CD4-positive, alpha-beta T cell (primary cell): ENCODE measurements at regions of chr18 and their contacts with region 1.

Region 1: DNA sequence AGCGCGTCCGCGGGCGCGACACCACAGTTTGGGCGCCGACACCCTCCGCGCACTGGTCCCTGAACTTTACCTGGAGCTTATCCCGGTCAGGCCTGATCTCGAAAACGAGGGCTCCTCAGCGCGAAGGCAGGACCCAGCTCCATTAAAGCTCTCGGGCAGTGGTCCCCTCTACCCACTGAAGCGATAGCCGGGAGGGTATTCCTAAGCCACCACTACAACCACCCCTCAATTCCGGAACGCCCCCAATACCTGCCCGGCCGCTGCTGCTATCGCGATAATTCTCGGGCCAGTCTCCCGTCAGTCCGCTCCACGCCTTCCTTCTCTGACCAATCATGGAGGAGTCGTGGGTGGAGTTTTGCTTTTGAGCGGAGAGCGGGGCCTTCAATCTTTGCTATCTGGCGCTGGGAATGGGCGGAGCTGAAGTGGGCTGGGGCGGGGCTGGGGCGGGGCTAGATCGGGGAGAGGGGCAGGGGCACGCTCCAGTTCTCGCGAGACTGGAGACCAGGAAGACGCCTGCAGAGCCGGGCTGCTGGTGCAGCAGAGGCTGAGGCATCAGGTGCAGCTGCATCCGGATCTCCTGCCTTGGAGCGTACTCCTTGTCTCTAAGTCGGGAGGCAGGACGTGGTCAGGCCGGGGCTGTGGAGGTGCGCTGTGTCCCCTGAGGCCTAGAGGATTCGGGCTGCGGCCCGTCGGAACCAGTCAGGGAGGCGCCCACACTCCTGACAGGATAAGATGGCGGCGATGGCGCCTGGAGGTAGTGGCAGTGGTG is at the starts of genes PIGN and RELCH:
- DNase-seq: peak; percentile 87 to 99 (median 91)
- ATAC-seq: peak; percentile 89
- H3K4me3 ChIP-seq: peak within 1 kb of the TSS; percentile 76
- H3K4me3 Mint-ChIP-seq: peak within 1 kb of the TSS; percentile 97
- H3K27ac ChIP-seq: peak within 1 kb of the TSS; percentile 66 to 78
- H3K27ac Mint-ChIP-seq: peak within 1 kb of the TSS; percentile 95
- H3K4me1 ChIP-seq: peaks cover 29% of the 10 kb centered on the region
- H3K4me1 Mint-ChIP-seq: peaks cover 72% of the 10 kb centered on the region
- H3K27me3 ChIP-seq: no peaks in the 10 kb centered on the region
- H3K27me3 Mint-ChIP-seq: no peaks in the 10 kb centered on the region
- CTCF ChIP-seq: no peak
- total RNA-seq, gene PIGN: 9.6 to 11.7 TPM
- total RNA-seq, gene RELCH: 39.6 to 44.3 TPM

Region 2: GRCh38 chr18:62138461-62139235 is 48.3 kb before region 1 on chr18:
- CTCF ChIA-PET with region 1: no interaction called
- POLR2A ChIA-PET with region 1: no interaction called
- intact Hi-C with region 1: no loop called
- DNase-seq: no peak
- ATAC-seq: no peak
- H3K4me3 ChIP-seq: no peak overlapping the region
- H3K4me3 Mint-ChIP-seq: no peak overlapping the region
- H3K27ac ChIP-seq: no peak overlapping the region
- H3K27ac Mint-ChIP-seq: no peak overlapping the region
- H3K4me1 ChIP-seq: no peaks in the 10 kb centered on the region
- H3K4me1 Mint-ChIP-seq: no peaks in the 10 kb centered on the region
- H3K27me3 ChIP-seq: no peaks in the 10 kb centered on the region
- H3K27me3 Mint-ChIP-seq: no peaks in the 10 kb centered on the region
- CTCF ChIP-seq: no peak

Region 3: DNA sequence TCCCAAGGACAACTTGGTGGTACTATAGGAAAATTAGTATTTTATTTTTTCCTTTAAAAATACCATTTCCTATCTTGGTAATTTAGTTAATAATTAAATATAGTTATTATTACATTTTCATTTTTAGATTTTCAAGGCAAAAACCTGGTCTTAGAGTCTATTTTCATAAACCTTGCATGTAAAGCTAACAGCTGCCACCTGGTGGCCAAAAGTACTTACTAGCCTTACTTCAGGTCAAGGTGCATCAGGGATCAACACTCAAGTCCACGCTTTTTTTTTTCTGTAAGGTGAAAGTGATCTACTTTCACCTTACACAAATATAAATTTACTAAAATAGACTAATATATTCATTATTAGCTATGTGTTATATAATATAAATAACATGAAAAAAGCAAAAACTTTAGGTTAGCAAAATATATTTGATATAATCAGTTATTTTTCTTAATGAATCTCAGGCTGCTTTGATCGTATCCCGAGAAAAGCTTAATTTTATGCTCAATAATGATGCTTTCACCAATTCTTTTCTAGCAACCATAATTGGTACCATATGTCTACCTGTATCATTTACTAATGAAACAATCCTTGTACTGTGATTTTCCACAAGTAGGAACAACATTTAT is 62.6 kb after region 1 on chr18:
- CTCF ChIA-PET with region 1: interaction called, 6 read pairs
- POLR2A ChIA-PET with region 1: interaction called, 17 read pairs
- intact Hi-C with region 1: loop called (anchors 1 kb)
- DNase-seq: peak; percentile 35 to 85 (median 67)
- ATAC-seq: peak; percentile 77
- H3K4me3 ChIP-seq: no peak overlapping the region
- H3K4me3 Mint-ChIP-seq: no peak overlapping the region
- H3K27ac ChIP-seq: no peak overlapping the region
- H3K27ac Mint-ChIP-seq: no peak overlapping the region
- H3K4me1 ChIP-seq: no peaks in the 10 kb centered on the region
- H3K4me1 Mint-ChIP-seq: no peaks in the 10 kb centered on the region
- H3K27me3 ChIP-seq: no peaks in the 10 kb centered on the region
- H3K27me3 Mint-ChIP-seq: no peaks in the 10 kb centered on the region
- CTCF ChIP-seq: peak; percentile 95

Region 4: GRCh38 chr18:62522504-62523254 is 335.7 kb after region 1 on chr18 and contains the start of gene ZCCHC2:
- CTCF ChIA-PET with region 1: no interaction called
- POLR2A ChIA-PET with region 1: interaction called, 11 read pairs
- intact Hi-C with region 1: loop called (anchors 5 kb)
- DNase-seq: peak; percentile 95 to 100 (median 98)
- ATAC-seq: peak; percentile 74
- H3K4me3 ChIP-seq: peak within 1 kb of the TSS; percentile 92
- H3K4me3 Mint-ChIP-seq: peak within 1 kb of the TSS; percentile 98
- H3K27ac ChIP-seq: peak within 1 kb of the TSS; percentile 62 to 75
- H3K27ac Mint-ChIP-seq: peak within 1 kb of the TSS; percentile 93
- H3K4me1 ChIP-seq: peaks cover 25% of the 10 kb centered on the region
- H3K4me1 Mint-ChIP-seq: peaks cover 40% of the 10 kb centered on the region
- H3K27me3 ChIP-seq: no peaks in the 10 kb centered on the region
- H3K27me3 Mint-ChIP-seq: no peaks in the 10 kb centered on the region
- CTCF ChIP-seq: no peak
- total RNA-seq, gene ZCCHC2: 85.0 to 85.4 TPM

Region 5: GRCh38 chr18:62982600-62983251 is 795.8 kb after region 1 on chr18:
- CTCF ChIA-PET with region 1: no interaction called
- POLR2A ChIA-PET with region 1: no interaction called
- intact Hi-C with region 1: loop called (anchors 2 to 10 kb)
- DNase-seq: peak in 13 of 14 experiments; percentile 27 to 76 (median 37)
- ATAC-seq: peak; percentile 74
- H3K4me3 ChIP-seq: peak overlapping the region; percentile 20
- H3K4me3 Mint-ChIP-seq: peak overlapping the region; percentile 48
- H3K27ac ChIP-seq: no peak overlapping the region
- H3K27ac Mint-ChIP-seq: no peak overlapping the region
- H3K4me1 ChIP-seq: peaks cover 6% of the 10 kb centered on the region
- H3K4me1 Mint-ChIP-seq: no peaks in the 10 kb centered on the region
- H3K27me3 ChIP-seq: no peaks in the 10 kb centered on the region
- H3K27me3 Mint-ChIP-seq: no peaks in the 10 kb centered on the region
- CTCF ChIP-seq: peak; percentile 75

Region 6: GRCh38 chr18:63422087-63422809 is 1235.3 kb after region 1 on chr18 and contains the start of gene VPS4B:
- CTCF ChIA-PET with region 1: no interaction called
- POLR2A ChIA-PET with region 1: no interaction called
- intact Hi-C with region 1: loop called in 1 of 2 experiments (anchors 5 kb)
- DNase-seq: peak; percentile 98 to 100 (median 99)
- ATAC-seq: peak; percentile 92
- H3K4me3 ChIP-seq: peak within 1 kb of the TSS; percentile 83
- H3K4me3 Mint-ChIP-seq: peak within 1 kb of the TSS; percentile 96
- H3K27ac ChIP-seq: peak within 1 kb of the TSS; percentile 84 to 93
- H3K27ac Mint-ChIP-seq: peak within 1 kb of the TSS; percentile 95
- H3K4me1 ChIP-seq: peaks cover 42% of the 10 kb centered on the region
- H3K4me1 Mint-ChIP-seq: peaks cover 25% of the 10 kb centered on the region
- H3K27me3 ChIP-seq: no peaks in the 10 kb centered on the region
- H3K27me3 Mint-ChIP-seq: peaks cover 8% of the 10 kb centered on the region
- CTCF ChIP-seq: no peak
- total RNA-seq, gene VPS4B: 46.0 to 50.8 TPM